Caco-2 (cell line): ENCODE measurements at regions of chr16 and their contacts with region 1.

Region 1: GRCh38 chr16:77236063-77236511 is 36.9 kb downstream of the SYCE1L start:
- DNase-seq: peak; percentile 86 to 93
- H3K4me3 ChIP-seq: no peak overlapping the region
- H3K4me3 Mint-ChIP-seq: peak overlapping the region; percentile 55
- H3K27ac Mint-ChIP-seq: no peak overlapping the region
- H3K4me1 ChIP-seq: peaks cover 7% of the 10 kb centered on the region; the same call in 1 of the 2 replicates
- H3K4me1 Mint-ChIP-seq: peaks cover 28% of the 10 kb centered on the region
- H3K27me3 ChIP-seq: no peaks in the 10 kb centered on the region
- H3K27me3 Mint-ChIP-seq: peaks cover 2% of the 10 kb centered on the region
- CTCF ChIP-seq: peak; percentile 99 to 100

Region 2: GRCh38 chr16:77289331-77289809 is 53.3 kb after region 1 on chr16:
- CTCF ChIA-PET with region 1: no interaction called
- POLR2A ChIA-PET with region 1: no interaction called
- intact Hi-C with region 1: loop called (anchors 2 kb)
- DNase-seq: peak; percentile 93 to 94
- H3K4me3 ChIP-seq: no peak overlapping the region
- H3K4me3 Mint-ChIP-seq: peak overlapping the region; percentile 70
- H3K27ac Mint-ChIP-seq: peak overlapping the region; percentile 97
- H3K4me1 ChIP-seq: peaks cover 40% of the 10 kb centered on the region
- H3K4me1 Mint-ChIP-seq: peaks cover 66% of the 10 kb centered on the region
- H3K27me3 ChIP-seq: no peaks in the 10 kb centered on the region
- H3K27me3 Mint-ChIP-seq: no peaks in the 10 kb centered on the region
- CTCF ChIP-seq: no peak

Region 3: GRCh38 chr16:77353587-77354263 is 117.6 kb after region 1 on chr16:
- CTCF ChIA-PET with region 1: no interaction called
- POLR2A ChIA-PET with region 1: no interaction called
- intact Hi-C with region 1: loop called (anchors 1 kb)
- DNase-seq: peak; percentile 54 to 61
- H3K4me3 ChIP-seq: no peak overlapping the region
- H3K4me3 Mint-ChIP-seq: no peak overlapping the region
- H3K27ac Mint-ChIP-seq: no peak overlapping the region
- H3K4me1 ChIP-seq: peaks cover 42% of the 10 kb centered on the region
- H3K4me1 Mint-ChIP-seq: peaks cover 29% of the 10 kb centered on the region
- H3K27me3 ChIP-seq: no peaks in the 10 kb centered on the region
- H3K27me3 Mint-ChIP-seq: no peaks in the 10 kb centered on the region
- CTCF ChIP-seq: no peak

Region 4: DNA sequence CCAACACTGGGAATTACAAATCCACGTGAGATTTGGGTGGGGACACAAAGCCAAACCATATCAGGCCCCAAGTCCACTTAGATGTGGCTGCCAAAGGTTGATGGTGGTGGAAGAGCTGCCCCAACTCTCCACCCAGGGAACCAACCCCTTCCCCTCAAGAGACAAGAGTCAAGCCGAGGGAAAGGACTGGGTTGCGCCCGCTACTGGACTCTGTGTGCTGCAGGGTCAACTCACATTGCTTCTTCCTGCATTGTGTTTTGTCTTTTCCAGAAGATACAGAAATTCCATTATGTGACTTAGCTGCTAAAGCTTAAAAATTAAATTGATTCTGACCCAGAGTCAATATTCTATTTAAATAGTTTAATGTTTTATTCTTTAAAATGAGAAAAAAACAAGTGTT is 140.3 kb after region 1 on chr16:
- CTCF ChIA-PET with region 1: no interaction called
- POLR2A ChIA-PET with region 1: no interaction called
- intact Hi-C with region 1: loop called (anchors 1 kb)
- DNase-seq: no peak
- H3K4me3 ChIP-seq: no peak overlapping the region
- H3K4me3 Mint-ChIP-seq: no peak overlapping the region
- H3K27ac Mint-ChIP-seq: no peak overlapping the region
- H3K4me1 ChIP-seq: peaks cover 31% of the 10 kb centered on the region
- H3K4me1 Mint-ChIP-seq: peaks cover 29% of the 10 kb centered on the region
- H3K27me3 ChIP-seq: no peaks in the 10 kb centered on the region
- H3K27me3 Mint-ChIP-seq: no peaks in the 10 kb centered on the region
- CTCF ChIP-seq: peak in 1 of 2 experiments; percentile 18

Region 5: GRCh38 chr16:77437859-77438258 is 201.8 kb after region 1 on chr16:
- CTCF ChIA-PET with region 1: no interaction called
- POLR2A ChIA-PET with region 1: no interaction called
- intact Hi-C with region 1: loop called (anchors 5 kb)
- DNase-seq: no peak
- H3K4me3 ChIP-seq: no peak overlapping the region
- H3K4me3 Mint-ChIP-seq: no peak overlapping the region
- H3K27ac Mint-ChIP-seq: no peak overlapping the region
- H3K4me1 ChIP-seq: 0 out of 2 replicates have a peak, but pooled peaks cover 8% of the 10 kb centered on the region
- H3K4me1 Mint-ChIP-seq: peaks cover 32% of the 10 kb centered on the region
- H3K27me3 ChIP-seq: no peaks in the 10 kb centered on the region
- H3K27me3 Mint-ChIP-seq: peaks cover 6% of the 10 kb centered on the region
- CTCF ChIP-seq: no peak

Region 6: GRCh38 chr16:77660311-77660710 is 424.2 kb after region 1 on chr16:
- CTCF ChIA-PET with region 1: interaction called, 3 read pairs
- POLR2A ChIA-PET with region 1: no interaction called
- intact Hi-C with region 1: loop called (anchors 1 kb)
- DNase-seq: peak in 1 of 2 experiments; percentile 38
- H3K4me3 ChIP-seq: no peak overlapping the region
- H3K4me3 Mint-ChIP-seq: no peak overlapping the region
- H3K27ac Mint-ChIP-seq: no peak overlapping the region
- H3K4me1 ChIP-seq: no peaks in the 10 kb centered on the region
- H3K4me1 Mint-ChIP-seq: peaks cover 6% of the 10 kb centered on the region
- H3K27me3 ChIP-seq: no peaks in the 10 kb centered on the region
- H3K27me3 Mint-ChIP-seq: peaks cover 17% of the 10 kb centered on the region
- CTCF ChIP-seq: peak; percentile 68 to 85